PC-9 (cell line): ENCODE measurements at regions of chr19 and their contacts with region 1.

Region 1: GRCh38 chr19:35168207-35168606 is 13.7 kb downstream of the FXYD5 start:
- DNase-seq: peak; percentile 70 to 88
- H3K4me3 ChIP-seq: peak overlapping the region; percentile 23; the same call in 1 of the 2 replicates
- H3K27ac ChIP-seq: peak overlapping the region; percentile 97
- H3K4me1 ChIP-seq: peaks cover 69% of the 10 kb centered on the region
- H3K27me3 ChIP-seq: no peaks in the 10 kb centered on the region
- CTCF ChIP-seq: no peak

Region 2: DNA sequence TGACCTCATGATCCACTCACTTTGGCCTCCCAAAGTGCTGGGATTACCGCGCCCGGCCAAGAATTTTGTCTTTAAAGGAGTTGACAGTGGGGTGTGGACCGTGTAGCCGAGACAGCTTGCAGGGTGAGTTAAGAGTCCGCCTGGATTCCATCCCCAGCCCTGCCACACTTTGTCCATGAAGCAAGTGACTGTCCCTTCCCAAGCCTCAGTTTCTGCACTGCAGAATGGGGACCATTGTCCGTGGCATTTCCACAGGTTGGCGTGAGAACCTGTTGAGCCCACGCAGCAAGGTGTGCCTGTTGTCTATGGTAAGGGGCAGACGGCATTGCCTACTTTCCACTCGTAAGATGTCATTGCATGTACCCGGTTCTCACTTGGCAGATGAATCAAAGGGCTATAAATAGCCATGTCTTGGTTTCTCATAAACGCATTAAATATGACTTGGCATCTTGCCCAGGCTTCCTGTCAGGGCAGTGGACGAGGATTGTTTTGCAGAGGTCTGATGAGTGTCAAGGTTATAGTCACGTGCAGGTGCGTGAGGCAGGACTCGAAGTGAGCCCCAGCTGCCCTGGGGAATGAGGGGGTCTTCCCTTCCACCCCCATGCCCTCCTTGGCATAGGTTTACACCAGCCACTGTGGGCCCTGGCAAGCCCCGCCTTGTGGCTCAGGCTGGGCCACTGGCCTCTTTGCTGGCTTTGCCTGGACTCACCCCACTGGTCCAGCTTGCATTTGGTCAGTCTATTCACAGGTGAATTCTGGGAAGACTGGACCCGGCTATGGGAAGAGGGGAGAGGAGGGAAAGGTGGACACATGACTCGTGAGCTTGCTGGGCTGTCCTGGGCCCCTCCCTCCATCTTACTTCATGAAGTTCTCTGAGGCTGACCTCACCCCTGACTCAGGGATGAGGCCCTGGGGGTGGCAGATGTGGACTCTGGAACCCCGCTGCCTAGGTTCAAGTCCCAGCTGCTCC is 45.7 kb after region 1 on chr19:
- CTCF ChIA-PET with region 1: no interaction called
- POLR2A ChIA-PET with region 1: no interaction called
- intact Hi-C with region 1: loop called (anchors 2 kb)
- DNase-seq: peak; percentile 72 to 88
- H3K4me3 ChIP-seq: peak overlapping the region; percentile 21; the same call in 1 of the 2 replicates
- H3K27ac ChIP-seq: peak overlapping the region; percentile 84
- H3K4me1 ChIP-seq: peaks cover 34% of the 10 kb centered on the region
- H3K27me3 ChIP-seq: no peaks in the 10 kb centered on the region
- CTCF ChIP-seq: no peak

Region 3: GRCh38 chr19:35436477-35437405 is 268.5 kb after region 1 on chr19:
- CTCF ChIA-PET with region 1: no interaction called
- POLR2A ChIA-PET with region 1: interaction called, 19 read pairs
- intact Hi-C with region 1: no loop called
- DNase-seq: peak; percentile 44 to 74
- H3K4me3 ChIP-seq: no peak overlapping the region
- H3K27ac ChIP-seq: peak overlapping the region; percentile 14
- H3K4me1 ChIP-seq: peaks cover 17% of the 10 kb centered on the region
- H3K27me3 ChIP-seq: no peaks in the 10 kb centered on the region; the same call in none of the 2 replicates
- CTCF ChIP-seq: no peak